AG04449 (cell line): ENCODE measurements at regions of chr11 and their contacts with region 1.

Region 1: DNA sequence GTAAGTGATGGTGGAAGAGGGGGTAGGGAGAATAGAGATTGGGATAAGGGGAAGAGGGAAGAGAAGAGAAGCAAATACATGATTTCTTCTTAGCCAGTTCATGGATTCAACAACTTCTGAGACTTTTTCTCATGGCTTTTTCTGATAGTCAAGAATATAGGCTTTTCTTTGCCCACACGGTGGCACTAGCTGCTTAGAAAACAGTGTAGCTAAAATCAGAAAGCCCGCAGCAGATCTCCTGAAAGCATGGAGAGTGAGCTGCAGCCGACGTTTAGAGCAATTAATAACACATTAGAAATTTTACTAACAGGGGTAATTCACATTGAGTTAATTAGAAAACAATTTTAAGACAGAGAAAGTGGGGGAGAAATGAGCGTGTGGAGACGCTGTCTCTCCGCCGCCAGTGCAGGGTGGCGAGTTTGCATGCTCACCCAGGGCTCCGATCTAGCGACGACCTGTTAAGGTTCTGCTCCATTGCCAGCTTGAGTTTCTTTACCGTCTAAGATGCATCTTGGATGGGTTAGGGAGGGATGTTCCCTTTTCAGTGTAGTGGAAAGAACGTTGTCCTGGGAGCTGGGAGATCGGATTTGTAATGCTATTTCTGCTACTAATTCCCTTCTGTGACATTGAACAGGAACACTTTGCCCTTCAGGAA is 3.3 kb upstream of the RAG1 start:
- DNase-seq: no peak
- H3K4me3 ChIP-seq: peak overlapping the region; percentile 41
- CTCF ChIP-seq: peak; percentile 44

Region 2: GRCh38 chr11:36316049-36316772 is 248.3 kb before region 1 on chr11:
- CTCF ChIA-PET with region 1: no interaction called
- POLR2A ChIA-PET with region 1: no interaction called
- DNase-seq: no peak
- H3K4me3 ChIP-seq: no peak overlapping the region
- CTCF ChIP-seq: no peak

Region 3: GRCh38 chr11:36509694-36510566 is 54.6 kb before region 1 on chr11 and contains the start of gene TRAF6:
- CTCF ChIA-PET with region 1: no interaction called
- POLR2A ChIA-PET with region 1: no interaction called
- DNase-seq: no peak
- H3K4me3 ChIP-seq: peak within 1 kb of the TSS; percentile 99
- CTCF ChIP-seq: peak; percentile 98

Region 4: DNA sequence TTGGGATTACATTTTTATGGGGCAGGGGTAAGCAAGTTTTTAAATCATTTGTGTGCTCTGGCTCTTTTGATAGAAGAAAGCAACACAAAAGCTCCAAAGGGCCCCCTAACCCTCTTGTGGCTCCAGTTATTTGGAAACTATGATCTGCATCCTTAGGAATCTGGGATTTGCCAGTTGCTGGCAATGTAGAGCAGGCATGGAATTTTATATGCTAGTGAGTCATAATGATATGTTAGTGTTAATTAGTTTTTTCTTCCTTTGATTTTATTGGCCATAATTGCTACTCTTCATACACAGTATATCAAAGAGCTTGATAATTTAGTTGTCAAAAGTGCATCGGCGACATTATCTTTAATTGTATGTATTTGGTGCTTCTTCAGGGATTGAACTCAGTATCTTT is 13.4 kb after region 1 on chr11:
- CTCF ChIA-PET with region 1: interaction called, 77 read pairs
- POLR2A ChIA-PET with region 1: no interaction called
- DNase-seq: no peak
- H3K4me3 ChIP-seq: no peak overlapping the region
- CTCF ChIP-seq: no peak

Region 5: DNA sequence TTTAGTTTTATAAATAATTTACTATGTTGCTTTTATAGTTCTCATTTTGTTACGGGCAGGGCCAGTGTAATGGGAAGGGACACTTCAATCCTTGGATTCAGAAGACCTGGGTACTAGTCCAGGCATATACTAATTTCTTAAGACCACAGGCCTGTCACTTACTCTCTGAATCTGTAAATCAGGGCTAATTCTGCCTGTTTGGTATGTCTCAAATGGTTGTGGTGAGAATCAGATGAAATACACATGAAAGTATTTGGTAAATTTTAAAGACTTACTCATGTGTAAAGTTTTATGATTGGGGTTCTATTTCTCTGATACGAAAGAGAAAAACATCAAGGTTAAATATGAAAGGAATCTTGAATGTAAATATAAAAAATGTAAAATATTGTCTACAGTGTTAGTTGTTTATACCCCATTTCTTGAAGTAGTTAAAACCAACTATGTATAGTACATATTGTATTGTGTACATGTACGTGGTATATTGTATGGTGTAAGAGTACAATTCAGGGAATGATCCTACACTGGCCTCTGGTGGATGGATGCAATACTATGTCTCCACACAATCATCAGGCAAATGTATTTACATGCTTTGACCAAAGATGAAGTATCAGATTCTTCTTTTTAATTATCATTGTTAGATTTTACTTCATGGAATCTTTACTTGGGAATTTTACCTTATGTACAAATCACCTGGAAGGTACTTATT is 58.1 kb after region 1 on chr11:
- CTCF ChIA-PET with region 1: interaction called, 59 read pairs
- POLR2A ChIA-PET with region 1: no interaction called
- DNase-seq: peak; percentile 4
- H3K4me3 ChIP-seq: no peak overlapping the region
- CTCF ChIP-seq: peak; percentile 53

Region 6: DNA sequence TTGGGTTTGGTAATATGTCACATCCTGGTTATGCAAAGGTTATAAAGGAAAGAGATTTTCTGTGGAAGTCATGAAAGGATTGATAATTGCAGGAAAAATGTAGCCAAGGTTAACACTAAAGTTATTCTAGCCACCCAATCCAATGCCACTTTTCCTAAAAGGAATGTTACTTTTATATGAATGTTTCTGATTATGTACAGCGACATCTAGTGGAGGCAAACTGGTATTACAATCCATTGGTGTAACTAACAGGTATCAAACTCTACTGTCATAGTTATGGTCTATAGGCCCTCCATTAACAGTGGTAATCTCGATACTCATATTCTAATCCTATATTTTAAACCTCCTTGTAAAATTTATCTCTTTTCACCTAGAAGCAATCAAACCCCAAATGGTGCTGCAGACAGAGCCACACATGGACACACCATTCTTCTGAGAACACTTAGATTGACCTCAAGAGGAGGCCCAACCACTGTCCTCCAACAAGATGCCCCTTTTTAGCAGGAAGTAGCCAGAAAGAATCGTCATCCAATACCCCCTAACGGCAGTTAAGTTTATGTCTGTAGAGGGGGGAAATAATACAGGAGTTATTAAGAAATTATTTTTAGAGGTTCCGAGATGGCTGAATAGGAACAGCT is 108.4 kb after region 1 on chr11:
- CTCF ChIA-PET with region 1: interaction called, 205 read pairs
- POLR2A ChIA-PET with region 1: no interaction called
- DNase-seq: peak; percentile 7
- H3K4me3 ChIP-seq: no peak overlapping the region
- CTCF ChIP-seq: peak; percentile 52

Region 7: DNA sequence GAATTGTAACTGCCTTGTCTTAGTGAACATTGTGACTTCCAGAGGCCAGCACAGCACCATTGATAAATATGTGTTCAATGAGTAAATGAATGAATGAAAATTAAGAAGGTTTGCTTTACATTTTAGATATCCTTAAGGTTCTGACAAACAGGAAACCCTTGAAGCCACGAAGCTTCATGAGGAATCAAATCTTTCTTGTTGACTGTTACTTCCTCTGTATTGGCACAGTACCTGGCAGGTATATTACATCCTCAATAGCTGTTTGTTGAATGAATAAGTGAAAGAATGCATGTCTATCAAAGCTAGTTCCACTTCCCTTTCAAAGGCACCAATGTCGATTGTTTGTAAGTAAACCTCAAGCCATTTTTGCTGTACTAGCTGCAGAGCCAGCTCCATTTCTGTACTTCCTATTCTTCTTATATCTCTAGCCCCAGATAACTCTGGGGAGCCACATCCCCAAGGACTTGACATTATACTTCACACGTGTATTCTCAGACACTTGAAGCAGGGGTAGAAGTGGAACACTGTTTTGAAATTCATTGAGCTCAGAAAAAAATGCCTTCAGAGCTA is 173.9 kb after region 1 on chr11:
- CTCF ChIA-PET with region 1: interaction called, 252 read pairs
- POLR2A ChIA-PET with region 1: no interaction called
- DNase-seq: no peak
- H3K4me3 ChIP-seq: no peak overlapping the region
- CTCF ChIP-seq: no peak

Region 8: GRCh38 chr11:36790526-36790925 is 226.0 kb after region 1 on chr11:
- CTCF ChIA-PET with region 1: no interaction called
- POLR2A ChIA-PET with region 1: no interaction called
- DNase-seq: no peak
- H3K4me3 ChIP-seq: no peak overlapping the region
- CTCF ChIP-seq: no peak